HepG2 (cell line): ENCODE measurements at regions of chr13 and their contacts with region 1.

Region 1: GRCh38 chr13:75357576-75358289 is 124.2 kb downstream of the TBC1D4 start:
- DNase-seq: peak; percentile 69
- ATAC-seq: peak; percentile 94
- H3K4me3 ChIP-seq: no peak overlapping the region
- H3K27ac ChIP-seq: no peak overlapping the region
- H3K4me1 ChIP-seq: peaks cover 13% of the 10 kb centered on the region
- H3K27me3 ChIP-seq: no peaks in the 10 kb centered on the region
- CTCF ChIP-seq: peak; percentile 67
- EP300 ChIP-seq: no peak
- POLR2A ChIP-seq: no peak
- RAD21 ChIP-seq: peak; percentile 18; the same call in 1 of the 2 replicates

Region 2: DNA sequence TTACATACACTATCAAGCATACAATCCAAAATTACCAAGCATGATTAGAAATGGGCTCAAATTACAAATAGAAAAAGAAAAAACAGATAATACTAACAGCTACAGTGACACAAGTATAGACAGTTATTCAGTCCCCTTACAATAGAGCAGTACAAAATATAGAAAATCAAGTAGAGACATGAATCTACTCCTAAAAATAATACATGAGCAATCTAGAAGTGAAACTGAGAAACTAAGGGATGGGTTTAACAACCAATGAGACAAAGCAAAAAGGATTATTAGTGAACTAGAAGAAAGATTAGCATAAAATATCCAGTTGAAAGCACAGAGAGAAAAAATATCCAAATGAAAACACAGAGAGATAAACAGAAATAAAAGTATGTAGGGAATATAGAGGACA is 302.4 kb before region 1 on chr13:
- CTCF ChIA-PET with region 1: no interaction called
- POLR2A ChIA-PET with region 1: no interaction called
- in situ Hi-C with region 1: no loop called
- intact Hi-C with region 1: no loop called
- DNase-seq: no peak
- ATAC-seq: no peak
- H3K4me3 ChIP-seq: no peak overlapping the region
- H3K27ac ChIP-seq: no peak overlapping the region
- H3K4me1 ChIP-seq: no peaks in the 10 kb centered on the region
- H3K27me3 ChIP-seq: no peaks in the 10 kb centered on the region
- CTCF ChIP-seq: no peak
- EP300 ChIP-seq: no peak
- POLR2A ChIP-seq: no peak
- RAD21 ChIP-seq: no peak

Region 3: DNA sequence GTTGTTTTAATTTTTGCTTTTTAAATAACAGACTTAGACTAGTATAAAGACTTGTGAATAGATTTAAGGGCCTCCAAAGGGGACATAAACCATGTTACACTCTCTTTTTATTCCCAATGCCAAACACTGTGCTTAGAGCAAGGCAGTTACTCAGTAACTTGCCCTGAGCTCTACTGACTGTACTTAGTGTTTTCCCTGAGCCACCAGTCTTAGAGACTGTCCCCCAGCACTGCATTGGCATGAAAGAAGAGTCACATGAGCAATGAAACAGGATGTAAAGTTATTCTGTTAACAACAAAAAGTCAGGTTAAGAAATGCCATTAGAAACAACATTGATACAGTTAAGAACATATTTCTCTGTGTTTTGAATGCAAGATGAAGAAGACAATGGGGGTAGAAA is 63.6 kb before region 1 on chr13:
- CTCF ChIA-PET with region 1: no interaction called
- POLR2A ChIA-PET with region 1: no interaction called
- in situ Hi-C with region 1: no loop called
- intact Hi-C with region 1: loop called (anchors 5 kb)
- DNase-seq: peak; percentile 28
- ATAC-seq: peak; percentile 96
- H3K4me3 ChIP-seq: no peak overlapping the region
- H3K27ac ChIP-seq: no peak overlapping the region
- H3K4me1 ChIP-seq: peaks cover 10% of the 10 kb centered on the region
- H3K27me3 ChIP-seq: no peaks in the 10 kb centered on the region
- CTCF ChIP-seq: no peak
- EP300 ChIP-seq: no peak
- POLR2A ChIP-seq: no peak
- RAD21 ChIP-seq: no peak

Region 4: GRCh38 chr13:75395066-75395465 is 37.3 kb after region 1 on chr13:
- CTCF ChIA-PET with region 1: no interaction called
- POLR2A ChIA-PET with region 1: no interaction called
- in situ Hi-C with region 1: no loop called
- intact Hi-C with region 1: no loop called
- DNase-seq: no peak
- ATAC-seq: no peak
- H3K4me3 ChIP-seq: no peak overlapping the region
- H3K27ac ChIP-seq: no peak overlapping the region
- H3K4me1 ChIP-seq: peaks cover 55% of the 10 kb centered on the region
- H3K27me3 ChIP-seq: no peaks in the 10 kb centered on the region
- CTCF ChIP-seq: no peak
- EP300 ChIP-seq: no peak
- POLR2A ChIP-seq: no peak
- RAD21 ChIP-seq: no peak